ENCODE measurements at regions of chr15 and their contacts with region 1.

Region 1: GRCh38 chr15:40338041-40338657 is 2.6 kb downstream of the CCDC9B start:
- DNase-seq: peak; percentile 91
- CTCF ChIP-seq: peak; percentile 92

Region 2: GRCh38 chr15:39747326-39747725 is 590.8 kb before region 1 on chr15:
- CTCF ChIA-PET with region 1: no interaction called
- POLR2A ChIA-PET with region 1: no interaction called
- DNase-seq: no peak
- CTCF ChIP-seq: no peak

Region 3: DNA sequence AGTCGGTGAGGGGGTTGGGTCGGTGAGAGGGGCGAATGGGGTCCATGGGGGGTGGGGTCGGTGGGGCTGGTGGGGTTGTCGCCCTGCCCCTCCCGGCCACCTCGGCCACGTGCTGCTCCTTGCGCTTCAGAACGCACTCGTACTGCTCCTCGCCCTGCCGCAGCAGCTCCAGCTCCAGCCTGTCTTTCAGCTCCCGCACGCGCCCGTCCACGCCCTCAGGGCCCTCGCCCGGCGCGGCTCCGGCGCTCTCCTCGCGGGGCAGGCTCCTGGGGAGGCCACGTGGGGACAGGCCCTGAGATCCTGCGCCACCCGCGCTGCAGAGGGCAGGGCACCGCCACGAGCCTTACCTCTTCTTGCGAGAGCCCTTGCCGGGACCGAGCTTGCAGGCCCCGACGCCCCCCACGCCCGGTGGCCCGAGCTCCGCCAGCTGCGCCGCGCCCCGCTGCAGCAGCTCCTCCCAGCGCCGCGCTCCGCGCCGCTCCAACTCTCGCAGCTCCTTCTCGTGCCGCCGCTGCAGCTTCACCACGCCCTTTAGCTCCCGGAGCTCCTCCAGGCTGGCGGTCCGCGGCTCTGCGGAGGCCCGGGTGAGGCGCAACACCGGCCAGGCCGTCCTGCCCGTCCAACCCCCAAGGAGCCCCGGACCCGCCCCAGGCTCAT is 47.1 kb before region 1 on chr15:
- CTCF ChIA-PET with region 1: interaction called, 10 read pairs
- POLR2A ChIA-PET with region 1: no interaction called
- DNase-seq: no peak
- CTCF ChIP-seq: no peak

Region 4: GRCh38 chr15:40313531-40314398 is 24.4 kb before region 1 on chr15:
- CTCF ChIA-PET with region 1: interaction called, 212 read pairs
- POLR2A ChIA-PET with region 1: no interaction called
- DNase-seq: no peak
- CTCF ChIP-seq: no peak

Region 5: DNA sequence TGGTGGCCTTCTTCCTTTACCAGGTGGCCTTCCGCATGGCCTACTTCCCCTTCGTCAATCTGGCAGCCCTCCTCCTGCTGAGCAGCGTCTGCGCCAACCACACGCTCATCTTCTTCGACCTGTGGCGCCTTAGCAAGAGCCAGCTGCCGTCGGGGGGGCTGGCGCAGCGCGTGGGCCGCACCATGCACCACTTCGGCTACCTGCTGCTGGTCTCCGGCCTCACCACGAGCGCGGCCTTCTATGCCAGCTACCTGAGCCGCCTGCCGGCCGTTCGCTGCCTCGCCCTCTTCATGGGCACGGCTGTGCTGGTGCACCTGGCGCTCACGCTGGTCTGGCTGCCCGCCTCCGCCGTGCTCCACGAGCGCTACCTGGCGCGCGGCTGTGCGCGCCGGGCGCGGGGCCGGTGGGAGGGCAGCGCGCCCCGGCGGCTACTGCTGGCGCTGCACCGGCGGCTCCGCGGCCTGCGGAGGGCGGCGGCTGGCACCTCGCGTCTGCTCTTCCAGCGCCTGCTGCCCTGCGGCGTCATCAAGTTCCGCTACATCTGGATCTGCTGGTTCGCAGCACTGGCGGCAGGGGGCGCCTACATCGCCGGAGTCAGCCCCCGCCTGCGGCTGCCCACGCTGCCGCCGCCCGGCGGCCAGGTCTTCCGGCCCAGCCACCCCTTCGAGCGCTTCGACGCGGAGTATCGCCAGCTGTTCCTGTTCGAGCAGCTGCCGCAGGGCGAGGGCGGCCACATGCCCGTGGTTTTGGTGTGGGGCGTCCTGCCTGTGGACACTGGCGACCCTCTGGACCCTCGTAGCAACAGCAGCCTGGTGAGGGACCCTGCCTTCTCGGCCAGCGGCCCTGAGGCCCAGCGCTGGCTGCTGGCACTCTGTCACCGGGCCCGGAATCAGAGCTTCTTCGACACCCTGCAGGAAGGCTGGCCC is 29.8 kb after region 1 on chr15:
- CTCF ChIA-PET with region 1: interaction called, 29 read pairs
- POLR2A ChIA-PET with region 1: no interaction called
- DNase-seq: peak; percentile 92
- CTCF ChIP-seq: peak; percentile 88

Region 6: GRCh38 chr15:40412095-40412759 is 74.1 kb after region 1 on chr15:
- CTCF ChIA-PET with region 1: interaction called, 53 read pairs
- POLR2A ChIA-PET with region 1: no interaction called
- DNase-seq: no peak
- CTCF ChIP-seq: no peak

Region 7: GRCh38 chr15:40440743-40441564 is 102.8 kb after region 1 on chr15 and contains the start of gene BAHD1:
- CTCF ChIA-PET with region 1: interaction called, 16 read pairs
- POLR2A ChIA-PET with region 1: no interaction called
- DNase-seq: peak; percentile 100
- CTCF ChIP-seq: peak; percentile 18

Region 8: DNA sequence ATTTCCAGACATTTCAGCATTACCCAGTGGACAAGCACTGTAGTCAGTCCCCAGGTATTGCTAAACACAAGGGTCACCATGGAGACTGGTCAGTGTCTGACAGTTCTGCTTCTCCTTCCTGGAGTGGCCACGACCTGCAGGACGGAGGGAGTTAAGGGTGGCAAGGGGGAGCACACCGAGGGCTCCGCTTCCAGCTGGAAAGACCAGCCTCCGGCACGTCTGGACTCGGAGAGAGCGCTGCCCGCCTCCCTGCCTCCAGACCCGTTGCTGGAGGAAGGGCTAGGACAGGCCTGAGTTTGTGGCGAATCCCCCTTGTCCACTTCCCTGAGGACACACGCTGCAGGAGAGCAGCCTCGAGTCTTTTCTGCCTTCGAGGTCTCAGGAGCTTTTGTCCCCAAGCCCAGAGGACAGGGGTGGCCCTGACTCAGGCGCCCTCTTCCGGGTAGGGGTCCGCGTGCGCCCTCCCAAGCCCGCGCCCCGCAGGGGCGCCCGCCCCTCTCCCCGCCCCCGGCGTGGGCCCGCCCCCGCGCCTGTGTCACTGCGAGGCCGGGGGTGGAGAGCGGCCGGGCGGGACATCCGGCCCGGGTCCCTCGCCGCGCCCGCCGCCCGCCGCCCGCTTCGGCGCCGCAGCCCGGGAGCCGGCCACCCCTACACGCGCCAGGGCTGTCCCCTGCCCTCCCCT is 132.4 kb after region 1 on chr15 and contains the start of gene CHST14:
- CTCF ChIA-PET with region 1: no interaction called
- POLR2A ChIA-PET with region 1: no interaction called
- DNase-seq: peak; percentile 88
- CTCF ChIP-seq: no peak